IMR-90 (cell line): ENCODE measurements at regions of chr2 and their contacts with region 1.

Region 1: GRCh38 chr2:1550658-1551316 is 137.5 kb downstream of the TPO start:
- DNase-seq: peak; percentile 22
- ATAC-seq: peak; percentile 67
- H3K4me3 ChIP-seq: no peak overlapping the region
- H3K27ac ChIP-seq: no peak overlapping the region
- H3K4me1 ChIP-seq: peaks cover 18% of the 10 kb centered on the region
- H3K27me3 ChIP-seq: no peaks in the 10 kb centered on the region; the same call in 1 of the 2 replicates
- CTCF ChIP-seq: peak; percentile 77
- POLR2A ChIP-seq: no peak
- RAD21 ChIP-seq: peak; percentile 58

Region 2: DNA sequence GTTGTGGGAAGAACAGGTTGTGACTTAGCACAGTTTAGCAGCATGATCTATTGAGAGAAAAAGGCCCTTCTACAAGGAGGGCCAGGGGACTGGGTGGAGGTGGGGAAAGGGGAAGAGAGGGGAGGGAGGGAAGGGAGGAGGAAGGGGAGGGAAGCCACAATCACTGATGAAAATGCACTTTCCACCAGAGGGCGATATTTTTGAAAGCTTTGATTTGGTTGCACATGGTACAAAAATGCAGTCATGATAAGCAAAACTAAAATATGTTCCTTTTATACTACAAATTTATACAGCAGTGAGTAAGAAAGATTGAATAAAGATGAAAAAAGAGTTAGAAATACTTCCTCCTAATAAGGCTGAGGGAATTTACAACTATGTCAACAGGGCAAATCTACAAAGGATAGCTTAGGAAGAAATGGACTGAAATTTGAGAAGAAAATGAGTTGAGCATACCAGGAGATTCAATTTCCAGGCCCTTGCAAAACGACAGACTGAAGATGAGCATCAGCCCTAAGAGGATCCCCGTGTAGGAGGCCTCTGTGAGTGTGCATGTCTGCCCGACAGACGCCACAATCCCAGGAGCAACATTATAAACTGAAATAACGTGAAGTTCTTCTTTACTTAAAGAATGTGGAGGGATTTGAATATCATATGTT is 1304.2 kb before region 1 on chr2:
- CTCF ChIA-PET with region 1: no interaction called
- POLR2A ChIA-PET with region 1: no interaction called
- dilution Hi-C with region 1: no loop called
- in situ Hi-C with region 1: loop called (anchors 10 kb)
- intact Hi-C with region 1: loop called (anchors 2 kb)
- DNase-seq: peak; percentile 85
- ATAC-seq: peak; percentile 94
- H3K4me3 ChIP-seq: no peak overlapping the region
- H3K27ac ChIP-seq: peak overlapping the region; percentile 87; the same call in 1 of the 2 replicates
- H3K4me1 ChIP-seq: no peaks in the 10 kb centered on the region; the same call in 1 of the 2 replicates
- H3K27me3 ChIP-seq: no peaks in the 10 kb centered on the region
- CTCF ChIP-seq: peak; percentile 74
- POLR2A ChIP-seq: no peak
- RAD21 ChIP-seq: peak; percentile 55

Region 3: GRCh38 chr2:714005-714741 is 836.6 kb before region 1 on chr2:
- CTCF ChIA-PET with region 1: interaction called, 3 read pairs
- POLR2A ChIA-PET with region 1: no interaction called
- dilution Hi-C with region 1: no loop called
- in situ Hi-C with region 1: loop called (anchors 10 kb)
- intact Hi-C with region 1: loop called (anchors 1 kb)
- DNase-seq: peak; percentile 54
- ATAC-seq: peak; percentile 74; the same call in 1 of the 2 replicates
- H3K4me3 ChIP-seq: no peak overlapping the region
- H3K27ac ChIP-seq: no peak overlapping the region
- H3K4me1 ChIP-seq: no peaks in the 10 kb centered on the region
- H3K27me3 ChIP-seq: peaks cover 2% of the 10 kb centered on the region; the same call in 1 of the 2 replicates
- CTCF ChIP-seq: peak; percentile 66
- POLR2A ChIP-seq: no peak
- RAD21 ChIP-seq: peak; percentile 70

Region 4: GRCh38 chr2:960061-960736 is 590.6 kb before region 1 on chr2:
- CTCF ChIA-PET with region 1: no interaction called
- POLR2A ChIA-PET with region 1: no interaction called
- dilution Hi-C with region 1: no loop called
- in situ Hi-C with region 1: loop called (anchors 10 kb)
- intact Hi-C with region 1: no loop called
- DNase-seq: no peak
- ATAC-seq: no peak
- H3K4me3 ChIP-seq: no peak overlapping the region
- H3K27ac ChIP-seq: no peak overlapping the region
- H3K4me1 ChIP-seq: no peaks in the 10 kb centered on the region
- H3K27me3 ChIP-seq: no peaks in the 10 kb centered on the region
- CTCF ChIP-seq: no peak
- POLR2A ChIP-seq: no peak
- RAD21 ChIP-seq: no peak

Region 5: DNA sequence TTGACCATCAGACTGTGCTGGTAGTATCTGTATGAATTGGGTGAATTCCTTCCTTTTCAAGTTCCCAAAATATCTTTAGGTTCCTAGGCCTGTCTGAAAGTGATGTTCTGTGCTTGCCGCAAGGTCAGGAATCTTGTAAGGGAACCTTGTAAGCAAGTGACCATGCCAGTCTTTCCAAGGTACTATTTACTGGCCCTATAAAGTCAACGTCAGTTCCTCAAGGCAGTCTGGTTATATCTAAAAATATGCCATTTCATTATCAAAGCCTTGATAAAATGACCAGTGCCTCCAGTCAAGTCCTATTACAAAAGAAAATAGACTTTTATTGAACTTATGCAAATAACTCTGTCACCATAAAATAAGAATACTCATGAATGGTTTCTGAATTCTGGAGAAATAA is 225.9 kb before region 1 on chr2:
- CTCF ChIA-PET with region 1: no interaction called
- POLR2A ChIA-PET with region 1: no interaction called
- dilution Hi-C with region 1: no loop called
- in situ Hi-C with region 1: no loop called
- intact Hi-C with region 1: no loop called
- DNase-seq: no peak
- ATAC-seq: no peak
- H3K4me3 ChIP-seq: no peak overlapping the region
- H3K27ac ChIP-seq: no peak overlapping the region
- H3K4me1 ChIP-seq: no peaks in the 10 kb centered on the region
- H3K27me3 ChIP-seq: no peaks in the 10 kb centered on the region
- CTCF ChIP-seq: no peak
- POLR2A ChIP-seq: no peak
- RAD21 ChIP-seq: no peak

Region 6: GRCh38 chr2:1653956-1654695 is 103.3 kb after region 1 on chr2:
- CTCF ChIA-PET with region 1: interaction called, 3 read pairs
- POLR2A ChIA-PET with region 1: interaction called, 3 read pairs
- dilution Hi-C with region 1: no loop called
- in situ Hi-C with region 1: no loop called
- intact Hi-C with region 1: loop called (anchors 5 kb)
- DNase-seq: peak; percentile 87
- ATAC-seq: no peak
- H3K4me3 ChIP-seq: no peak overlapping the region
- H3K27ac ChIP-seq: peak overlapping the region; percentile 91
- H3K4me1 ChIP-seq: peaks cover 34% of the 10 kb centered on the region
- H3K27me3 ChIP-seq: no peaks in the 10 kb centered on the region
- CTCF ChIP-seq: no peak
- POLR2A ChIP-seq: 0 out of 2 replicates have a peak, but pooled peaks have one; percentile 8
- RAD21 ChIP-seq: no peak

Region 7: GRCh38 chr2:1817256-1818051 is 266.7 kb after region 1 on chr2:
- CTCF ChIA-PET with region 1: interaction called, 15 read pairs
- POLR2A ChIA-PET with region 1: no interaction called
- dilution Hi-C with region 1: no loop called
- in situ Hi-C with region 1: no loop called
- intact Hi-C with region 1: loop called (anchors 1 kb)
- DNase-seq: peak; percentile 98
- ATAC-seq: peak; percentile 94
- H3K4me3 ChIP-seq: no peak overlapping the region
- H3K27ac ChIP-seq: peak overlapping the region; percentile 76
- H3K4me1 ChIP-seq: peaks cover 14% of the 10 kb centered on the region
- H3K27me3 ChIP-seq: no peaks in the 10 kb centered on the region
- CTCF ChIP-seq: peak; percentile 98
- POLR2A ChIP-seq: no peak; the same call in 1 of the 2 replicates
- RAD21 ChIP-seq: peak; percentile 97

Region 8: DNA sequence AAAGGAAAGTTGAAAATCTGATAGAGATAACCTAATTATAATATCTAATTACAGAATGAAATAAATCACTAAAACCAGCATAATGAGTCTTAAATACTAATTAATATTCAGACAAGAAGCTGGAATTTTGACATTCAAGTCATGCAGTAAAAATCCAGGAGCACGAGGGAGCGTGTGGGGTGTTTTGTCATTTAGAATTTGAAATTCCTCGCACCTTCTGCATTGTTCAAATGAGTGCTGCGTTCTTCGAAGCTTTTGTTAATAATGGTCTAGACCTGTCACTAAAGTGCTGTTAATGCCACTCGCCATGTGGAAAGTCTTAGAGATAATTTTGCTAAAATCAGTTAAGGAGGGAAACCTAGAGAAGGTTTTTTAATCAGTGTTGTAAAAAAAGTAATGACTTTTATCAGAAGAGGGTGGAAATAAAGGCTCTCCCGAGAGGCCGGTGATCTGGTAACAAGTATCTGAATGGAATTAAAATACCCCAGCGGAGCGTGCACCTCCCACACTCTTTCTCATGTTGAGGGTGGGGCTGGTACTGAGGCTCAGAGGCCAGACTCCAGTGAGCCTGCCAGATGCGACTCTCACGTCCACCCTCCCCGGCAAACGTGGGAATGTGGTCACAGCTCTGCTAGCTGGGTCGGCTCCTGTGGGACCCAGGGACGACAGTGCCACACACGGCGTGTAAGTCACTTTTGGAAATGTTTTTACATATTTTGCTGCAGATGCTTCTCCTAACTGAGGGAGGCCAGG is 849.7 kb after region 1 on chr2:
- CTCF ChIA-PET with region 1: no interaction called
- POLR2A ChIA-PET with region 1: no interaction called
- dilution Hi-C with region 1: no loop called
- in situ Hi-C with region 1: no loop called
- intact Hi-C with region 1: no loop called
- DNase-seq: no peak
- ATAC-seq: no peak
- H3K4me3 ChIP-seq: no peak overlapping the region
- H3K27ac ChIP-seq: no peak overlapping the region
- H3K4me1 ChIP-seq: no peaks in the 10 kb centered on the region
- H3K27me3 ChIP-seq: no peaks in the 10 kb centered on the region
- CTCF ChIP-seq: no peak
- POLR2A ChIP-seq: no peak
- RAD21 ChIP-seq: no peak